MCF 10A (cell line): ENCODE measurements at regions of chr3 and their contacts with region 1.

Region 1: GRCh38 chr3:146503461-146504202 is 34.3 kb upstream of the PLSCR2 start:
- DNase-seq: peak; percentile 86
- H3K4me3 Mint-ChIP-seq: peak overlapping the region; percentile 2
- H3K27ac Mint-ChIP-seq: peak overlapping the region; percentile 59
- H3K4me1 Mint-ChIP-seq: peaks cover 43% of the 10 kb centered on the region
- H3K27me3 Mint-ChIP-seq: no peaks in the 10 kb centered on the region
- CTCF ChIP-seq: peak; percentile 24

Region 2: DNA sequence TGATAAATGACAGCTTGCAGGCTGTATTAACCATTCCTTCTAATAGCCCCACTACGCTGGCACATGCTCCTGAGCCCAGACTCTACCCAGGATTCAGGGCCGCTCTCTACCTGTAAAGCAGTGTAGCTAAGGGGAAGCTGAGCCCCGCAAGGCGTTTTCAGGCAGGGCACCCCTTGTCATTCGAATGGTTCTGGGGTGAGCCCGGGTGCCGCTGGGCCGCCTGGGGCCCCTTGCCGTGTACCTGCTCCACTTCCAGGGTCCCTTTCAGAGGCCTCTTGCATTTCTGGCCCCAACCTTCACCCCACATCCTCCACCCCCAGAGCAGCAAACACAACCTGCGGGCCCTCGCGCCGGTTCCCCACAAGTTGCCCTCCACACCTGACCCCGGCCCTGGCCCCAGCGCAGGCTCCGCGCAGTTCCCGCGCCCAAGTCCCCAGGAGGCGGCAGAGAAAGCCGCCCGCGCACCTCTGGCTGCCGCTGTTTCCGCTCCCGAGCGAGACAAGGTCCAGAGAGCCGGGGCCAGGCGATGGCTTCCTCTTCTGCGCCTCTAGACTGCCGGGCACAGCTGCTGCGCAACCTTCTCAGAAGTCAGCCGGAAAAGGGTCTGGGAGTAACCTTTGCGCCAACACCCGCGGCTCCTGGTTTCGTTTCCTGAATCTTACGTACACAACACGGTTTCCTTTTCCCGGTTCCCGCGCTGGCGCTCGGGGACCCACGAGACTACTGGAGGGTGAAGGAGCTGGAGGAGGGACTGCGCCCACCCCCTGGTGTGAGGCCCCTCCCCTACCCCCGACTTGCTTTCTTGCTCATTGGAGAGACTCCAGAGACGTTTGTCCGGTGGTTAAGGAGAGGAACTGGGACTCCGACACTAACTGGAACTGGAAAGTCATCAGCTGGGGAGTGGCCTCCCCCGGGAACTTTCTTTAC is 40.6 kb after region 1 on chr3 and contains the start of gene PLSCR1:
- CTCF ChIA-PET with region 1: interaction called, 13 read pairs
- POLR2A ChIA-PET with region 1: interaction called, 14 read pairs
- intact Hi-C with region 1: loop called (anchors 2 kb)
- DNase-seq: peak; percentile 99
- H3K4me3 Mint-ChIP-seq: peak within 1 kb of the TSS; percentile 79
- H3K27ac Mint-ChIP-seq: peak within 1 kb of the TSS; percentile 96
- H3K4me1 Mint-ChIP-seq: peaks cover 28% of the 10 kb centered on the region
- H3K27me3 Mint-ChIP-seq: no peaks in the 10 kb centered on the region
- CTCF ChIP-seq: no peak
- total RNA-seq, gene PLSCR1: 62.8 and 79.2 TPM in 2 replicates